T-cell (primary cell): ENCODE measurements at regions of chr1 and their contacts with region 1.

Region 1: GRCh38 chr1:72284348-72285073 is 2.2 kb upstream of the NEGR1 start:
- DNase-seq: peak in 7 of 35 experiments; percentile 0 to 25 (median 9)
- ATAC-seq: peak in 2 of 4 experiments; percentile 25 to 29
- H3K4me3 ChIP-seq: peak overlapping the region; percentile 49 to 91
- H3K4me3 Mint-ChIP-seq: no peak overlapping the region
- H3K27ac ChIP-seq: no peak overlapping the region
- H3K27ac Mint-ChIP-seq: no peak overlapping the region
- H3K4me1 ChIP-seq: peaks cover 6 to 9% of the 10 kb centered on the region in 2 experiments
- H3K4me1 Mint-ChIP-seq: peaks cover 15 to 18% (median 17%) of the 10 kb centered on the region in 3 donors
- H3K27me3 ChIP-seq: peaks cover 0 to 21% of the 10 kb centered on the region in 2 experiments
- H3K27me3 Mint-ChIP-seq: peaks cover 0 to 15% of the 10 kb centered on the region in 2 donors

Region 2: DNA sequence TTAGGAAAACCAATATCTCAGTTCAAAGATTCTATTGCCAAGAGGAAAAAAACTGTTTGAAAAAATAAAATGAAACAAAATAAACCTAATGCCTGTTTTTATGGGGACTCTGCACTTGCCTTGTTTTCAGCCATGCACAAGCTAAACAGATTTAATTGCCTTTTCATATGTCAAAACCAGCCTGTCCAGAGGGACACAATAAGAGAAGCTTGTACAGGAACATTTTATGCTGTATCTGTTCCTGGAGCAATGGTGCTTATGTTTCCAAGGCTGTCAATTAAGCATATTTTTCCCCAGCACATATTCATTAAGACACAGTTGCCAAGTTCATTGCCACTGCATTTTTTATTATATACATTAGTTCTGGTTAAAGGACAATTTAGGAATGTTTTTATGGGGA is 1442.5 kb after region 1 on chr1:
- CTCF ChIA-PET with region 1: interaction called in 1 of 2 experiments, 12 read pairs
- POLR2A ChIA-PET with region 1: no interaction called
- DNase-seq: no peak
- ATAC-seq: no peak
- H3K4me3 ChIP-seq: no peak overlapping the region
- H3K4me3 Mint-ChIP-seq: no peak overlapping the region
- H3K27ac ChIP-seq: no peak overlapping the region
- H3K27ac Mint-ChIP-seq: no peak overlapping the region
- H3K4me1 ChIP-seq: no peaks in the 10 kb centered on the region
- H3K4me1 Mint-ChIP-seq: no peaks in the 10 kb centered on the region
- H3K27me3 ChIP-seq: no peaks in the 10 kb centered on the region
- H3K27me3 Mint-ChIP-seq: no peaks in the 10 kb centered on the region